ENCODE measurements at regions of chr11 and their contacts with region 1.

Region 1: GRCh38 chr11:13289081-13289480 is 11.5 kb downstream of the BMAL1 start:
- DNase-seq: no peak
- ATAC-seq: no peak
- H3K4me3 ChIP-seq: no peak overlapping the region
- H3K27ac ChIP-seq: no peak overlapping the region
- H3K4me1 ChIP-seq: peaks cover 0 to 26% (median 0%) of the 10 kb centered on the region in 9 donors
- H3K27me3 ChIP-seq: no peaks in the 10 kb centered on the region
- CTCF ChIP-seq: no peak

Region 2: DNA sequence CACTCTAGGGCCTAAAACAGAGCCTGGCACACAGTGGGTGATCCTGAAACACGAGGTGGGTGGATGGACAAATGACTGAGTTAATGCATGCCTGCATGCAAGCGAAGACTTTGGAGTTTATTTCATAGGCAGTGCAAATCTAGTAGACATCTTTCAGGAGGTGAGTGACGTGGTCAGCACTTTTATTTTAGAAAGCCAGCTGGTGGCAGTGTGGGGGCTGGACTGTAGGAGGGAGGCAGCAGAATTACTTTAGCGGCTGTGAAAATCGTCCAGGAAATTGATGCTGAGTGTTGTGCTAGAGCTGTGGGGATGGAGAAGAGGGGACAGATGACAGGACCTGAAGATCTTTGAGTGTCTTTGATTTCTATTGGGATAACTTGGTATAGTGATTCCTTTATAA is 35.6 kb after region 1 on chr11:
- intact Hi-C with region 1: loop called in 1 of 10 experiments (anchors 5 kb)
- DNase-seq: no peak
- ATAC-seq: peak in 7 of 8 donors; percentile 27 to 79 (median 71)
- H3K4me3 ChIP-seq: no peak overlapping the region
- H3K27ac ChIP-seq: no peak overlapping the region
- H3K4me1 ChIP-seq: peaks cover 0 to 35% (median 13%) of the 10 kb centered on the region in 9 donors
- H3K27me3 ChIP-seq: no peaks in the 10 kb centered on the region
- CTCF ChIP-seq: peak in 3 of 9 donors; percentile 17 to 30 (median 23)

Measured in heart right ventricle (tissue), 16 donors.